Left lung (tissue), 14 donors: ENCODE measurements at regions of chr13 and their contacts with region 1.

Region 1: DNA sequence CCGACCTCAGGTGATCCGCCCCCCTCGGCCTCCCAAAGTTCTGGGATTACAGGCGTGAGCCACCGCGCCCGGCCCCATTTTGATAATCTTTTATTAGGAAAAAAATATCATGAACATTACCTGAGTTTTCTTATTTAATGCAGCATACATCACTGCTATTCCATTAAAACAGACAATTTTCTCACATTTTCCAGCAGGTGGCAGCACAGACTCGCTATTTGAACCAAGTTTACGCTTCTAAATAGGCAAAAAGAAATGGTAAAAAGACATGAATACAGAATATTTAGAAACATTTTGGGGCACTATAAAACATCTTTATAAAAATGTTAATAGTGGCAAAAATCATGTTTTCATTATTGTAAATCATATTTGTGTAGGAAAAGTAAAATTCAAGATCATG is 903.1 kb downstream of the SLITRK6 start:
- DNase-seq: peak in 3 of 4 donors; percentile 29 to 79 (median 59)
- ATAC-seq: peak; percentile 43
- H3K4me3 ChIP-seq: no peak overlapping the region
- H3K27ac ChIP-seq: no peak overlapping the region
- H3K4me1 ChIP-seq: no peaks in the 10 kb centered on the region
- H3K27me3 ChIP-seq: no peaks in the 10 kb centered on the region
- CTCF ChIP-seq: peak; percentile 36 to 58

Region 2: DNA sequence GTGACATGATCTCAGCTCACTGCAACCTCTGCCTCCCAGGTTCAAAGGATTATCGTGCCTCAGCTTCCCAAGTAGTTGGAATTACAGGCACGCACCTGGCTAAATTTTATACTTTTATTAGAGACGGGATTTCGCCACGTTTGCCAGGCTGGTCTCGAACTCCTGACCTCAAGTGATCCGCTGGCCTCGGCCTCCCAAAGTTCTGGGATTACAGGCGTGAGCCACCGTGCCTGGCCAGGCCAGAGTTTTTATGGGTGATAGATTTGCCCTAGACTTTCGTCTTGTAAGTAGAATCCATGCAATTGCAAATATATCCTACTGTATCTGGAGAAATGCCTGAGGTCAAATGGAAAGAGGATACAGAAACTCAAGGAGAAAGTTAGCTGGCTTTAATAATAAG is 194.0 kb before region 1 on chr13:
- intact Hi-C with region 1: no loop called
- DNase-seq: peak in 1 of 4 donors; percentile 18
- ATAC-seq: no peak
- H3K4me3 ChIP-seq: no peak overlapping the region
- H3K27ac ChIP-seq: no peak overlapping the region
- H3K4me1 ChIP-seq: no peaks in the 10 kb centered on the region
- H3K27me3 ChIP-seq: no peaks in the 10 kb centered on the region
- CTCF ChIP-seq: no peak

Region 3: GRCh38 chr13:85828149-85828548 is 932.0 kb after region 1 on chr13:
- intact Hi-C with region 1: loop called in 1 of 2 experiments (anchors 10 kb)
- DNase-seq: peak in 1 of 4 donors; percentile 33
- ATAC-seq: no peak
- H3K4me3 ChIP-seq: no peak overlapping the region
- H3K27ac ChIP-seq: no peak overlapping the region
- H3K4me1 ChIP-seq: no peaks in the 10 kb centered on the region
- H3K27me3 ChIP-seq: no peaks in the 10 kb centered on the region
- CTCF ChIP-seq: peak; percentile 33 to 46